IMR-90 (cell line): ENCODE measurements at regions of chr6 and their contacts with region 1.

Region 1: DNA sequence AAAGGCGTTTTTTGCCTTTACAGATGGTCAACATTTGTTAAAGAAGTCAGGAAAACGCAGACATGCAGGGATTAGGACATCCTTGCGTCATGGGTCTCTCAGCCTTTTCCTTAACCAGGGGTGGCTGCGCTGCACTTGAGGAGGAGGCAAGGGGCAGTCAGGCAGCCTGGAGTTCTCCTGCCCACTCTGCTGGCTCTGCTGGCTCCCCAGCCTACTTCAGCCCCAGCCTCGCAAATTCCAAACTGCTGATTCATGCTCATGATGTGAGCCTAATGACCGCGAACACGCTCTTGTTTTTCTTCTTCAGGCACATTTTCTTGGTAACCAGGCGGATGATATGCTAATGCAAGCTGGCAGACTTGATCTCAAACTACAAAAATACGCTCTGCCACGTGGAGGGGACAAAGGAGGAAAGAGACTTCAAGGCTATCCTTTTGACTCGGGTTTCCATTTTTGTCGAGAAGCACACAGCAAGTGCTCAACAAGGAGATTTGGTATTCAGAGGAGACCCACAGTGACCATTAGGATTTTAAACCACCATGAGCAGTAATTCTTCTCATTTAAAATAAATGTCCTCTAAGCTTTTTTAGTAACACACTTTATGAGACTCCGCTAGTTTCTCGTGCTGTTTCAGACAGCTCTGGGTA is 290.3 kb upstream of the STXBP5 start:
- DNase-seq: peak; percentile 99
- ATAC-seq: peak; percentile 88
- H3K4me3 ChIP-seq: peak overlapping the region; percentile 28; the same call in 1 of the 2 replicates
- H3K27ac ChIP-seq: peak overlapping the region; percentile 97
- H3K4me1 ChIP-seq: peaks cover 16% of the 10 kb centered on the region
- H3K27me3 ChIP-seq: no peaks in the 10 kb centered on the region
- CTCF ChIP-seq: 0 out of 2 replicates have a peak, but pooled peaks have one; percentile 12
- POLR2A ChIP-seq: peak; percentile 81
- RAD21 ChIP-seq: peak; percentile 50

Region 2: DNA sequence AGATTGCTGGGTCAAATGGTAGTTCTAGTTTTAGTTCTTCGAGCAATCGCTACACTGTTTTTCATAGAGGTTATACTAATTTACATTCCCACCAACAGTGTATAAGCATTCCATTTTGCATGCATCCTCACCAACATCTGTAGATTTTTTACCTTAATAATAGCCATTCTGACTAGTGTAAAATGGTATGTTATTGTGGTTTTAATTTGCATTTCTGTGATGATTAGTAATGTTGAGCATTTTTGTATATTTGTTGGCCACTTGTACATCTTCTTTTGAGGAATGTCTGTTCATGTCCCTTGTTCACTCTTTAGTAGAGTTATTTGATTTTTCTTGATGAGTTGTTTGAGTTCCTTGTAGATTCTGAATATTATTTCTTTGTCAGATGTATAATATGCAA is 648.9 kb before region 1 on chr6:
- CTCF ChIA-PET with region 1: no interaction called
- POLR2A ChIA-PET with region 1: no interaction called
- dilution Hi-C with region 1: no loop called
- in situ Hi-C with region 1: no loop called
- intact Hi-C with region 1: no loop called
- DNase-seq: no peak
- ATAC-seq: no peak
- H3K4me3 ChIP-seq: no peak overlapping the region
- H3K27ac ChIP-seq: no peak overlapping the region
- H3K4me1 ChIP-seq: no peaks in the 10 kb centered on the region
- H3K27me3 ChIP-seq: no peaks in the 10 kb centered on the region
- CTCF ChIP-seq: no peak
- POLR2A ChIP-seq: no peak
- RAD21 ChIP-seq: no peak

Region 3: DNA sequence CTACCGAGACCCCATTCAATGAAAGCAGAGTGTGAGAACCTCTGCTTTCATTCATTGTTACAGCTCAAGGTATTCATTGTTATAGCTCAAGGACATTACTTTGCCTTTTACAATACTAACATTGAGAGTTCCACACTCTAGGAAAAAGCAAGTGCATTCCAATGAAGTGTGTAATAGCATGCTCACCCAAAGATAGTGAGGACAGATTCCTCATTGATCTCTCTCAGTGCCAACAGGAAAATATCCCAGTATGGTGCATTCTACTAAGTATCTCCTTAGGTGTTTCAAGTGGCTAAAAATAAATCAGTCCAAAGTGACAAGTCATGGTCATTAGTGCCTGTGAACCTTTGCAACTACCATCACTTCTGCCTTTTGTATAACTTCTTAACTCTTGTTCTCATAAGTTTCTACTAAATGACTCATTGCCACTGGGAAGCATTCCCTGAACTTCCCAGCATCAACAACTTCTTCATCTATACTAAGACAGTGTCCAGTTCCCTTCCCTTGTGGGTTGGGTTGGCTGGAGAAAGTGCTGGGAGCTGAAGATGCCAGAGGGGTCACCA is 149.6 kb after region 1 on chr6:
- CTCF ChIA-PET with region 1: interaction called, 3 read pairs
- POLR2A ChIA-PET with region 1: no interaction called
- dilution Hi-C with region 1: no loop called
- in situ Hi-C with region 1: no loop called
- intact Hi-C with region 1: loop called (anchors 1 kb)
- DNase-seq: peak; percentile 89
- ATAC-seq: peak; percentile 93
- H3K4me3 ChIP-seq: no peak overlapping the region
- H3K27ac ChIP-seq: peak overlapping the region; percentile 41; the same call in 1 of the 2 replicates
- H3K4me1 ChIP-seq: peaks cover 8% of the 10 kb centered on the region
- H3K27me3 ChIP-seq: no peaks in the 10 kb centered on the region
- CTCF ChIP-seq: no peak
- POLR2A ChIP-seq: no peak
- RAD21 ChIP-seq: no peak; the same call in 1 of the 2 replicates

Region 4: GRCh38 chr6:147099974-147100373 is 186.0 kb after region 1 on chr6:
- CTCF ChIA-PET with region 1: no interaction called
- POLR2A ChIA-PET with region 1: no interaction called
- dilution Hi-C with region 1: no loop called
- in situ Hi-C with region 1: no loop called
- intact Hi-C with region 1: loop called (anchors 5 kb)
- DNase-seq: peak; percentile 93
- ATAC-seq: peak; percentile 99
- H3K4me3 ChIP-seq: no peak overlapping the region
- H3K27ac ChIP-seq: no peak overlapping the region
- H3K4me1 ChIP-seq: peaks cover 5% of the 10 kb centered on the region
- H3K27me3 ChIP-seq: no peaks in the 10 kb centered on the region
- CTCF ChIP-seq: no peak
- POLR2A ChIP-seq: no peak
- RAD21 ChIP-seq: no peak

Region 5: DNA sequence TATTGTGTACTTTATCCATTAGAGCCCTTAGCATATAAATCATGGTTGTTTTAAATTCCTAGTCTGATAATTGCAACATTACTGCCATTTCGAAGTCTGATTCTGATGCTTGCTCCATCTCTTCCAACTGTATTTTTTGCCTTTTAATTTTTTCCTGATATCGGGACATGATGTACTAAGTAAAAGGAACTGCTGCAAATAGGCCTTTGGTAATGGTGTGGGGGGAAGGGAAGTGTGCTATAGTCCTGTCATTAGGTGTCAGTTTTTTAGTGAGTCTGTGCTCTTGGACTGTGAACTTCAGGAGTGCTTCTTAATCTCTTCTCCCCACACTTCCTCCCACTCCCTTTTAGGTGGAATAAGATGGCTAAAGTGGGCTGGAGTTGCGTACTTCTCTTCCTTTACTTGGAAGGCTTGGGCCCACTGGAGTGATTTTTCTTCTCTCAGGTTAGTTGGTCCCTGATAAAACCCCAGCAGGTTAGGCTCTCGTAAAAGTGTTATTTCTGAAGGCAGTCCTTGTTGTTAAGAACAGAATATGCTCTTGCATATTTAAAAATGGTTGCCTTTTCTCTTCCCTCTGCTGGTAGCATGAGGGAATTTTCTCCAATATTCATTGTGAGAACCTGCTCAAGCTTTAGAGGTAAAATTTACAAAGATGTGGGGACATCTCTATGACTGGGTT is 308.3 kb after region 1 on chr6:
- CTCF ChIA-PET with region 1: no interaction called
- POLR2A ChIA-PET with region 1: no interaction called
- dilution Hi-C with region 1: no loop called
- in situ Hi-C with region 1: loop called (anchors 25 kb)
- intact Hi-C with region 1: loop called (anchors 5 kb)
- DNase-seq: peak; percentile 52
- ATAC-seq: peak; percentile 75
- H3K4me3 ChIP-seq: no peak overlapping the region
- H3K27ac ChIP-seq: peak overlapping the region; percentile 95; the same call in 1 of the 2 replicates
- H3K4me1 ChIP-seq: peaks cover 8% of the 10 kb centered on the region
- H3K27me3 ChIP-seq: no peaks in the 10 kb centered on the region
- CTCF ChIP-seq: peak; percentile 52
- POLR2A ChIP-seq: no peak
- RAD21 ChIP-seq: peak; percentile 55

Region 6: GRCh38 chr6:147285087-147285855 is 371.3 kb after region 1 on chr6:
- CTCF ChIA-PET with region 1: no interaction called
- POLR2A ChIA-PET with region 1: no interaction called
- dilution Hi-C with region 1: no loop called
- in situ Hi-C with region 1: no loop called
- intact Hi-C with region 1: loop called (anchors 2 kb)
- DNase-seq: peak; percentile 65
- ATAC-seq: peak; percentile 67
- H3K4me3 ChIP-seq: no peak overlapping the region
- H3K27ac ChIP-seq: no peak overlapping the region
- H3K4me1 ChIP-seq: peaks cover 5% of the 10 kb centered on the region
- H3K27me3 ChIP-seq: no peaks in the 10 kb centered on the region
- CTCF ChIP-seq: peak; percentile 56
- POLR2A ChIP-seq: no peak
- RAD21 ChIP-seq: peak; percentile 60